PC-9 (cell line): ENCODE measurements at regions of chr7 and their contacts with region 1.

Region 1: GRCh38 chr7:42208572-42208971 is 28.4 kb downstream of the GLI3 start:
- DNase-seq: no peak
- H3K4me3 ChIP-seq: no peak overlapping the region
- H3K27ac ChIP-seq: no peak overlapping the region
- H3K4me1 ChIP-seq: no peaks in the 10 kb centered on the region
- H3K27me3 ChIP-seq: peaks cover 48% of the 10 kb centered on the region
- CTCF ChIP-seq: no peak

Region 2: GRCh38 chr7:41503438-41503837 is 705.1 kb before region 1 on chr7:
- CTCF ChIA-PET with region 1: no interaction called
- POLR2A ChIA-PET with region 1: no interaction called
- intact Hi-C with region 1: no loop called
- DNase-seq: no peak
- H3K4me3 ChIP-seq: no peak overlapping the region
- H3K27ac ChIP-seq: no peak overlapping the region
- H3K4me1 ChIP-seq: no peaks in the 10 kb centered on the region
- H3K27me3 ChIP-seq: no peaks in the 10 kb centered on the region
- CTCF ChIP-seq: no peak

Region 3: DNA sequence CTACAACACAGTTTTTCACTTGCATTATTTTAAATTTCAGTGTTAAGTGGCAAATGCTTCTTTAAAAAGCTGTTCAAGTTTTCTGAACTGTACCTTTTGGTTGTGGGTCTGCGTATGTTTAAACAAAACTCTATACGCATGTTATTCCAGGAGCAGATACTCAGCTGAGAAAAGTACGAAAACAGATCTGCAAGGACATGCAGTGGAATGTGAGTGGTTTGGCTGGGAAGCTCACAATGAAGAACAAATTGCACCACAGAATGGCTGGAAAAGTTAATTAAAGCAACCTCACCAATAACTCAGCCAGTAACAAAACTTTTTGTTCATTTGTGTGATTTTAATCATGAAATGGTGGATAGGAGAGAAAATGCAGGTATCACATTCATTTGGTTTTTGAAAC is 10.9 kb after region 1 on chr7:
- CTCF ChIA-PET with region 1: interaction called, 15 read pairs
- POLR2A ChIA-PET with region 1: no interaction called
- intact Hi-C with region 1: no loop called
- DNase-seq: no peak
- H3K4me3 ChIP-seq: no peak overlapping the region
- H3K27ac ChIP-seq: no peak overlapping the region
- H3K4me1 ChIP-seq: no peaks in the 10 kb centered on the region
- H3K27me3 ChIP-seq: peaks cover 95% of the 10 kb centered on the region
- CTCF ChIP-seq: no peak

Region 4: DNA sequence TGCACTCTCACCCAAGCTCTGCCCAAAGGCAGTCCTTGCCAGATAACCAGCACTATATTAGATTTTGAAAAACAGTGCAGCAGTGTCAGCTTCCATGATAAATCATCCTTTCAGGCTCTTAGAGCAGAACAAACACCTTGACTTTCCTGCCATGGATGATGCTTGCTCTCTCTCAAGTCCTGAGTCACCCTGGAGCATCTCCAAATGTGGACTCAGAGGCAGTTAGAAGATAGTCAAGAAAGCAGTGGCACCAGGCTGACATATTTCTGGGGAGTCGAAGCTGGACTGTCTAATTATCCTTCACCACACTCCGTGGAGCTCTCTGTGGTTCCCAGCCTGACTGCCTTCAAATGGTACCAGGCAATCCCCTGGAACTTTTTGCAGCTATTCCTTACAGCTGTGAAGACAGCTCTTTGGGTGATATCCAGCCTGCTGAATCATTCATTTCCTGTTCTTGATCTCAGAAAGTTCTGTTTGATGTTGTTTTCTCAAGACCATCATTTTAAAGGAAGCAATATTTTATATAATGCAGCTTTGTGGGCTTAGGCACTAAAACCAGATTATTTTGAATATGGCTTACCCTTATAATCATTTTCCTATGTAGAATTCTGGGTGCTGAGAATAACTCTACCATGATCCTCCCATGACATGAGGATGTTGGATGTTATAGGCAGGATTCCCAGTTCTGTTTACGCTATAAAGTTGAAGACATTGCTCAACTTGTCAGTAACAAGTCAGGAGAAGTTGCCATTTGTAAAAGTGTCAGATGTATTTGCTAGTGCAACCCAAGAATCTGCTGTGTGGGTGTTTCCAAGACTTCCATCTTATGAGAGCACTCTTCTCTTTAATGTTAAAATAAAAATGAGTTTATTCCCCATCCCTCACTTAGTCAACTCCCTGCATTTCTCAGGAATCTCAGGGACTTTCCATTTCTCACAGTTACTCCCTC is 469.5 kb after region 1 on chr7:
- CTCF ChIA-PET with region 1: no interaction called
- POLR2A ChIA-PET with region 1: no interaction called
- intact Hi-C with region 1: no loop called
- DNase-seq: no peak
- H3K4me3 ChIP-seq: no peak overlapping the region
- H3K27ac ChIP-seq: no peak overlapping the region
- H3K4me1 ChIP-seq: no peaks in the 10 kb centered on the region
- H3K27me3 ChIP-seq: no peaks in the 10 kb centered on the region
- CTCF ChIP-seq: no peak